Dorsolateral prefrontal cortex (tissue), 120 donors: ENCODE measurements at regions of chr1 and their contacts with region 1.

Region 1: DNA sequence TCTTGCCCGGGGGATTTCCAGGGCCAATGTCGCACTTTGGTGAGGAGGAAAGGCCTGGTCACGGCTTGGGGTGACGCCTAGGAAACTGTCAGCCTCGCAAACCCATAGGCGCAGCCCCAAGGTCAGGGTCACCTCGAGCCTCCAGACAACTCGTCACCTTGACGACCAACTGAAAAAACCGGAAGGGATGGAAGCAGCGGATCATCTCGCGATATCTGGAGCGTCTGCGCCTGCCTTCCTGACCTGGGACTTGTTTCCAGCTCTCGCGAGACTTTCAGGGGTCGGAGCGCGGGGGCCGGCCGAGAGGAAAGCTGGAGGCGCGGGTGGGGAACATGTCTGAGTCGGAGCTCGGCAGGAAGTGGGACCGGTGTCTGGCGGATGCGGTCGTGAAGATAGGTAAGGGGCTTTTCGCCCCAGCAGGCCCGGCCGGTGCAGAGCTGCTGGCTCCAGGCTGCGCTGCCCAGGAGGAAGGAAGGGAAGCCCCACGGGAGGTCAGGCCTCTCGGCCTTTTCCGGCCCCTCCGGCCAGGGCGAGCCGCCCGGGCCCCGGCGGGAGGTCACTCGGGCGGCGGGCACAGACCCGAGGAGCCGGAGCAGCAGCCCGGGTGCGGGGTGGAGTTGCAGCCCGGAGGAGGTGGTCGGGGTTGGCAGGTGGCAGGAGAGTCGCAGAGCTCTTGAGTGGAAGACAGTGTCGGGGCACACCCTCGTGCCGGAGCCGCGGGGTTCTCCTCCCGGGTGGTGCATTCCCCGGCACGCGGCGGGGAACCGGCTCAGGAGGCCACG is 47.2 kb upstream of the NBL1 start:
- DNase-seq: peak; percentile 87 to 98 (median 96)
- H3K4me3 ChIP-seq: peak overlapping the region; percentile 73 to 100 (median 95)
- H3K27ac ChIP-seq: peak overlapping the region in 58 of 59 donors; percentile 60 to 97 (median 87)
- H3K27me3 ChIP-seq: no peaks in the 10 kb centered on the region
- CTCF ChIP-seq: peak in 12 of 56 donors; percentile 7 to 36 (median 22)

Region 2: DNA sequence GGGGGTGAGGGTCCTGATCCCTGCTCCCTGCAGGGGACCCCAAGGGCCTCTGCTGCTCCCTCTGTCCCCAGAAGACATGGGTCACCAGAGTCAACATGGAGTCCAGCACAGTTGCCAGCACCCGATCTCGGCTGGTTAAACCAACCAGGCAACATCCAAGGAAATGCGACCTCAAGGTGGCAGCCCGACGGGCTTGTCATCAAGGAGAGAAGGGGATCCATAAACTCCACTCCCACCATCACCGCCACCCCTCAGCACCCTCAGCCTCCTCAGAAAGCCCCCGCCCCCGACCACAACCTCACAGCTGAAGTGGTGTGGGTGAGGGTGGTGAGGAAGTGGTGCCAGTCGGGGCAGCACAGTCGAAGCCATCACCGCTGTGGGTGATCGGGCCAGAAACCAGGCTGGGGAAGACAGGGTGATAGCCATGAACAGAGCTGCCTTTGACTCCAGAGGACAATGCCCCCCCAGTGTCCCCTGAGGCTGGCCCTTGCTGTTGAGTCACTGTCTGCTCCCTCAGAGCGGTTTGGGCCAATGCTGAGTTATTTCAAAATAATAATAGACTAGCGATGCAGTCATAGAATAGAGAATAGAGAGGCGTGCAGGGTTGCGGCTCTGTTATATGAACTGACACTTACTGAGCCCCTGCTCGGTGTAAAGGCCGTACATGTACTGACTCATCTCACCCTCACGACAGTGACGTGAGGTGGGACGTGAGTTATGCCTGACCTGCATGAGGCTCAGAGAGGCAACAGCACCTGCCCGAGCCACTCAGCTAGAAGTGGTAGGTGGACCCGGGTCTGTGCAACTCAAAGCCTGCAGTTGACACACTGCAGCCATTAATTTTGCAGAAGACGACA is 551.7 kb before region 1 on chr1:
- intact Hi-C with region 1: no loop called
- DNase-seq: peak in 9 of 10 donors; percentile 60 to 87 (median 82)
- H3K4me3 ChIP-seq: peak overlapping the region in 10 of 59 donors; percentile 3 to 45 (median 20)
- H3K27ac ChIP-seq: peak overlapping the region in 1 of 59 donors; percentile 33
- H3K27me3 ChIP-seq: peaks cover 0 to 24% (median 0%) of the 10 kb centered on the region in 45 donors
- CTCF ChIP-seq: peak in 10 of 56 donors; percentile 6 to 32 (median 18)

Region 3: GRCh38 chr1:19384113-19384512 is 212.8 kb before region 1 on chr1:
- intact Hi-C with region 1: loop called in 1 of 2 experiments (anchors 10 kb)
- DNase-seq: no peak
- H3K4me3 ChIP-seq: no peak overlapping the region
- H3K27ac ChIP-seq: peak overlapping the region in 6 of 59 donors; percentile 10 to 28 (median 10)
- H3K27me3 ChIP-seq: no peaks in the 10 kb centered on the region
- CTCF ChIP-seq: no peak

Region 4: GRCh38 chr1:19424651-19425570 is 172.0 kb before region 1 on chr1:
- intact Hi-C with region 1: no loop called
- DNase-seq: peak in 4 of 10 donors; percentile 30 to 58 (median 48)
- H3K4me3 ChIP-seq: no peak overlapping the region
- H3K27ac ChIP-seq: peak overlapping the region in 53 of 59 donors; percentile 2 to 78 (median 60)
- H3K27me3 ChIP-seq: no peaks in the 10 kb centered on the region
- CTCF ChIP-seq: peak in 1 of 56 donors; percentile 6